ENCODE measurements at regions of chr12 and their contacts with region 1.

Region 1: GRCh38 chr12:107760809-107761501 is at the start of gene PRDM4:
- DNase-seq: peak; percentile 93
- ATAC-seq: peak; percentile 98 to 100 (median 99)
- H3K4me3 ChIP-seq: peak within 1 kb of the TSS; percentile 66 to 94 (median 90)
- H3K27ac ChIP-seq: peak within 1 kb of the TSS; percentile 62 to 89 (median 82)
- H3K4me1 ChIP-seq: peaks cover 0 to 39% (median 31%) of the 10 kb centered on the region in 9 donors
- H3K27me3 ChIP-seq: no peaks in the 10 kb centered on the region
- CTCF ChIP-seq: peak in 8 of 9 donors; percentile 23 to 66 (median 44)
- total RNA-seq, gene PRDM4: 10.6 to 15.4 (median 12.6) TPM

Region 2: GRCh38 chr12:107685360-107686248 is 75.4 kb before region 1 on chr12 and contains the start of gene PWP1:
- intact Hi-C with region 1: loop called in 3 of 10 experiments (anchors 5 to 10 kb)
- DNase-seq: peak; percentile 94 to 95
- ATAC-seq: peak; percentile 96 to 98 (median 98)
- H3K4me3 ChIP-seq: peak within 1 kb of the TSS; percentile 78 to 100 (median 92)
- H3K27ac ChIP-seq: peak within 1 kb of the TSS in 9 of 10 donors; percentile 74 to 91 (median 86)
- H3K4me1 ChIP-seq: peaks cover 0 to 28% (median 23%) of the 10 kb centered on the region in 9 donors
- H3K27me3 ChIP-seq: no peaks in the 10 kb centered on the region
- CTCF ChIP-seq: no peak
- total RNA-seq, gene PWP1: 11.1 to 16.0 (median 13.8) TPM

Region 3: GRCh38 chr12:107702106-107702505 is 58.8 kb before region 1 on chr12:
- intact Hi-C with region 1: loop called in 2 of 10 experiments (anchors 5 to 10 kb)
- DNase-seq: no peak
- ATAC-seq: no peak
- H3K4me3 ChIP-seq: no peak overlapping the region
- H3K27ac ChIP-seq: peak overlapping the region in 1 of 10 donors; percentile 28
- H3K4me1 ChIP-seq: peaks cover 0 to 8% (median 0%) of the 10 kb centered on the region in 9 donors
- H3K27me3 ChIP-seq: no peaks in the 10 kb centered on the region
- CTCF ChIP-seq: no peak

Region 4: GRCh38 chr12:107884769-107885694 is 124.1 kb after region 1 on chr12:
- intact Hi-C with region 1: loop called in 4 of 10 experiments (anchors 10 kb)
- DNase-seq: peak; percentile 23 to 38
- ATAC-seq: peak in 3 of 8 donors; percentile 17 to 58 (median 34)
- H3K4me3 ChIP-seq: no peak overlapping the region
- H3K27ac ChIP-seq: no peak overlapping the region
- H3K4me1 ChIP-seq: no peaks in the 10 kb centered on the region
- H3K27me3 ChIP-seq: peaks cover 0 to 58% (median 25%) of the 10 kb centered on the region in 7 donors
- CTCF ChIP-seq: peak; percentile 18 to 76 (median 71)